Psoas muscle (tissue), 8 donors: ENCODE measurements at regions of chr6 and their contacts with region 1.

Region 1: GRCh38 chr6:164085091-164086075 is 670.9 kb downstream of the QKI start:
- DNase-seq: peak; percentile 82 to 88
- ATAC-seq: peak; percentile 78 to 88 (median 82)
- H3K4me3 ChIP-seq: peak overlapping the region; percentile 44
- H3K27ac ChIP-seq: peak overlapping the region; percentile 74
- H3K4me1 ChIP-seq: peaks cover 9% of the 10 kb centered on the region
- H3K27me3 ChIP-seq: no peaks in the 10 kb centered on the region
- CTCF ChIP-seq: no peak

Region 2: DNA sequence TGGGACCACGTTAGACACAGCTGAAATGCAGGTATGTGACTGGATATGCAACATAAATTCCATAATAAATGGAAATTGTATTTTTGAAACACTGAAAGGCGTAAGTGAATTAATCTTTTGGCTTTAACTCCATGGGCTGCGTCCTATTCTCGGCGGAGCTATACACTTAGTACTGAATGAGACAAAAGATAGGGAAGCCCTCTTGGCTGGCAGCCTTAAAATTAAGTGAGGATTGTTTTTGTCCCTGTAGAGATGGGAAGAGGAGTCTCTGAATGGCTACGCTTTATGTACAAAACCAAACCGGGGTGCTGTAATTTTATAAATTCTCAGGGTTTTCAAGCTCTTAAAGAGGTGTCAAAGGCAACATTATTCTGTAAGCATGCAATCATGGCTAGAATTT is 241.0 kb before region 1 on chr6:
- intact Hi-C with region 1: no loop called
- DNase-seq: no peak
- ATAC-seq: no peak
- H3K4me3 ChIP-seq: no peak overlapping the region
- H3K27ac ChIP-seq: no peak overlapping the region
- H3K4me1 ChIP-seq: peaks cover 9% of the 10 kb centered on the region
- H3K27me3 ChIP-seq: no peaks in the 10 kb centered on the region
- CTCF ChIP-seq: no peak

Region 3: GRCh38 chr6:164048840-164049516 is 36.4 kb before region 1 on chr6:
- intact Hi-C with region 1: loop called in 1 of 2 experiments (anchors 5 kb)
- DNase-seq: no peak
- ATAC-seq: no peak
- H3K4me3 ChIP-seq: no peak overlapping the region
- H3K27ac ChIP-seq: no peak overlapping the region
- H3K4me1 ChIP-seq: no peaks in the 10 kb centered on the region
- H3K27me3 ChIP-seq: no peaks in the 10 kb centered on the region
- CTCF ChIP-seq: no peak